IMR-90 (cell line): ENCODE measurements at regions of chr10 and their contacts with region 1.

Region 1: DNA sequence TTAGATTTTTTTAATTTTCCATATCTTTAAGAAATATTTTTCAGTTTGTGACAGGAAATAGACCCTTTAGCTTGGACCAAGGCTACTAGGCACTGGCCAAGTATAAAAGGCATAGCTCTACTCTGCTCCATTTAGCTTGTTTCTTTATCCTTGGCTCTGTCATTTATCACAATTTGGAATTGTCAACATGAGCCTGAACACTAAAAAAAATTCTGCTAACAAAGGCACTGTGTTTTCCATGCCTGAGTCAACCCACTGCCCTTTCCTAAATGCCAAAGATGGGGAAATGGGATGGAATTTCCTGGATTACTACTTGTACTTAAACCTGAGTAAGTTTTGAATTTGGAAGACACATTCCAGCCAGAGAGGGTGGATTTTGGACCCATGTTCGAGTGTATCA is 128.4 kb downstream of the NSUN6 start:
- DNase-seq: peak; percentile 22
- ATAC-seq: peak; percentile 30; the same call in 1 of the 2 replicates
- H3K4me3 ChIP-seq: no peak overlapping the region
- H3K27ac ChIP-seq: no peak overlapping the region
- H3K4me1 ChIP-seq: peaks cover 5% of the 10 kb centered on the region
- H3K27me3 ChIP-seq: no peaks in the 10 kb centered on the region
- CTCF ChIP-seq: no peak
- POLR2A ChIP-seq: no peak
- RAD21 ChIP-seq: no peak

Region 2: DNA sequence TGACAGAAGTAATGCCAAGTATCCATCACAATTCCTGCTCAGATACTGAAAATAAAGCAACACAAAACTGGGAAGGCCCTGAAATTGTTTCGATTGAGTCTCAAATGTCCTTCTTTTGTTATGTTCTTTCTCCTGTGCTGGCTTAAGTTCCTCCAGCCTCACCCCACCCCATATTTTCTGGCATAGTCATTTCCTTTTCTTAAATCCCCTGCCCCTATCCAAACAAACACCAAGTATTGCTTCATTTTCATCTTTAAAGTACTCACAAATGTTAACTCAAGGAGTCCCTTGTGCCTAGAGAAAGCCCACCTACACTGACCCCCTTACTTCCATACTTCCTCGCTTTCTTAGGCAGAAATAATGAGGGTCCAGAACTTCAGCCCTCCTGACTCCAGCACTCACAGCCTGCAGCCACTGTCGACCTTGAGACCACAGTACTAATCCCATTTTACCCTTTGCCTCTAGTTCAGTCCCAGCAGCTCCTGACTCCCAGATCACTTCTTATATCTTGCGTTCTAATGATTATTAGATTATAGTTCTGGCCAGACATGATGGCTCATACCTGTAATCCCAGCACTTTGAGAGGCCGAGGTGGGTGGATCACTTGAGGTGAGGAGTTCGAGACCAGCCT is 995.4 kb before region 1 on chr10:
- CTCF ChIA-PET with region 1: no interaction called
- POLR2A ChIA-PET with region 1: no interaction called
- dilution Hi-C with region 1: no loop called
- in situ Hi-C with region 1: no loop called
- intact Hi-C with region 1: no loop called
- DNase-seq: peak; percentile 89
- ATAC-seq: peak; percentile 79
- H3K4me3 ChIP-seq: no peak overlapping the region
- H3K27ac ChIP-seq: peak overlapping the region; percentile 89
- H3K4me1 ChIP-seq: peaks cover 7% of the 10 kb centered on the region
- H3K27me3 ChIP-seq: no peaks in the 10 kb centered on the region
- CTCF ChIP-seq: no peak
- POLR2A ChIP-seq: no peak
- RAD21 ChIP-seq: no peak

Region 3: GRCh38 chr10:18505456-18506118 is 17.4 kb before region 1 on chr10:
- CTCF ChIA-PET with region 1: interaction called, 11 read pairs
- POLR2A ChIA-PET with region 1: no interaction called
- dilution Hi-C with region 1: no loop called
- in situ Hi-C with region 1: no loop called
- intact Hi-C with region 1: no loop called
- DNase-seq: peak; percentile 80
- ATAC-seq: peak; percentile 73
- H3K4me3 ChIP-seq: no peak overlapping the region
- H3K27ac ChIP-seq: no peak overlapping the region
- H3K4me1 ChIP-seq: 0 out of 2 replicates have a peak, but pooled peaks cover 1% of the 10 kb centered on the region
- H3K27me3 ChIP-seq: no peaks in the 10 kb centered on the region
- CTCF ChIP-seq: no peak
- POLR2A ChIP-seq: no peak
- RAD21 ChIP-seq: no peak